ENCODE measurements at regions of chr6 and their contacts with region 1.

Region 1: DNA sequence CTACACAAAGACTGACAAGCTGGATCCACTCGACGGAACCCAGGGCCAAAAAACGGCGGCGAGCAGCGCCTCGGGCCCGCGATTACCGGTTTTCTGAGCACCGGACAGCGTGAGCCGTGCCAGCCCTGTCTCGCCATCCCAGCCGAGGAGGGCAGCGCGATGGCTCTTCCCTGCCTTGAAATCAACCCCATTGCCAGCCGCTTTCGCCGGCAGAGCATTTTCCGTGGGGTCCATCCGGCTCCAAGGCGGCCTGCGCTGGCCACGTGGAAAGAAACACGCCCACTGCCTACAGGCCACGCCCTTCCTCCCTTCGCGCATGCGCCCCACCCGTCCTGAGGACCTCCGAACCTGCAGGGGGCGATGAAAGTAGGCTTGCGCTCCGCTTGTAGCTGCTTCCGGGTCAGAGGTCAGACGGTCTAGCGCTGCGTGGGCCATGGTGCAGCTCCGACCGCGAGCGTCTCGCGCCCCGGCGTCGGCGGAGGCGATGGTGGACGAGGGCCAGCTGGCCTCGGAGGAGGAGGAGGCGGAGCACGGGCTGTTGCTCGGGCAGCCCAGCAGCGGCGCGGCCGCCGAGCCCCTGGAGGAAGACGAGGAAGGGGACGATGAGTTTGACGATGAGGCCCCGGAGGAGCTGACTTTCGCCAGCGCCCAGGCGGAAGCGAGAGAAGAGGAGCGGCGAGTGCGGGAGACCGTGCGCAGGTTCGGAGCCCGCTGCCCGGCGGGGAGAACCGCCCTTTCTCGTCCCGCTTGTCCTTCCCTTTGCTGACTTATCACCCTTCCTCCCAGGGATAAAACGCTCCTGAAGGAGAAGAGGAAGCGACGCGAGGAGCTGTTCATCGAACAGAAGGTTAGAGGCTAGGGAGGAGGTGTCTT is at the start of gene NOL7:
- H3K4me3 ChIP-seq: peak within 1 kb of the TSS; percentile 73
- H3K27ac ChIP-seq: peak within 1 kb of the TSS; percentile 60
- H3K4me1 ChIP-seq: peaks cover 12% of the 10 kb centered on the region
- CTCF ChIP-seq: peak; percentile 100

Region 2: DNA sequence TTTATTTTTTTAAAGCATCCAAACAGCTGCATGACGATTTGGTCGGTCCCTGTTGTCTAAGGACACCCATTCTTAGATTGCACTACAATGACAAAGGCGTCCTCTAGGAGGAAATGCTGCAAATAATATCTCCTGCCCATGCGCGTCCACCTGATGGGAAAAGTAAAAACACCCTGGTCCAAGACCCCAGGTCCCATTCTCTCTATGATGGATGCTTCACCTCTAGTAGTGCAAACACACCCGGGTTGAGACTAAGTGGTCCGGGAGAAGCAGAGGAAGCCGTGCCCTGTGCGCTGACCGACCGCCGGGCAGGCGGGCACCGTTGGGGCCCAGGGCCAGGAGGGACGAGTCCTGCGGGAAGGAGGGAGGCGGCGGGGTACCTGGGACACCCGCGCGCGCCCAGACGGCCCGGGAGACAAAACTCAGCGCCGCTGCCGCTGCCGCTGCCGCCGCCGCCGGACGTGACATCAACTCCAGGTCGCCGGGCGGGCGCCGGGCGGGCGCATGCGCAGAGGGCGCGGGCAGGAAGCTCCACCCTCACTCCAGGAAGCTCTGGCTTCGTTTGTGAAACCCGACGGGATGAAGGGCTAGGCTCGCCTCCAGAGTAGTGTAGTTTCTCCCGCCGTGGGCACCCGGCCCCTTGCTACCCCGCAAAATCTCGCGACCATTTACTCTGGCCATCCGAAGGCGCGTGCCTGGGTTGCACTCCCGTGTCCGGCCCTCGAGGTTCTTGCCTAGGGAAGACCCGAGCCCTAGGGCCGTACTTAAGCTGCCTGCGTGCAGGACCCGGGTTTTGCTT is 286.9 kb before region 1 on chr6 and contains the start of gene TBC1D7:
- CTCF ChIA-PET with region 1: interaction called, 9 read pairs
- POLR2A ChIA-PET with region 1: interaction called, 21 read pairs
- H3K4me3 ChIP-seq: peak within 1 kb of the TSS; percentile 97
- H3K27ac ChIP-seq: peak within 1 kb of the TSS; percentile 83
- H3K4me1 ChIP-seq: peaks cover 3% of the 10 kb centered on the region; the same call in 1 of the 2 replicates
- CTCF ChIP-seq: peak; percentile 40; the same call in 1 of the 2 replicates

Region 3: GRCh38 chr6:13604546-13605416 is 10.4 kb before region 1 on chr6:
- CTCF ChIA-PET with region 1: interaction called, 10 read pairs
- POLR2A ChIA-PET with region 1: interaction called, 7 read pairs
- H3K4me3 ChIP-seq: no peak overlapping the region
- H3K27ac ChIP-seq: no peak overlapping the region
- H3K4me1 ChIP-seq: no peaks in the 10 kb centered on the region
- CTCF ChIP-seq: no peak

Region 4: GRCh38 chr6:13668291-13668928 is 53.2 kb after region 1 on chr6:
- CTCF ChIA-PET with region 1: no interaction called
- POLR2A ChIA-PET with region 1: no interaction called
- H3K4me3 ChIP-seq: no peak overlapping the region
- H3K27ac ChIP-seq: no peak overlapping the region
- H3K4me1 ChIP-seq: peaks cover 29% of the 10 kb centered on the region
- CTCF ChIP-seq: no peak

Region 5: GRCh38 chr6:13696226-13696625 is 81.1 kb after region 1 on chr6:
- CTCF ChIA-PET with region 1: interaction called, 14 read pairs
- POLR2A ChIA-PET with region 1: interaction called, 7 read pairs
- H3K4me3 ChIP-seq: no peak overlapping the region
- H3K27ac ChIP-seq: no peak overlapping the region
- H3K4me1 ChIP-seq: peaks cover 12% of the 10 kb centered on the region; the same call in 1 of the 2 replicates
- CTCF ChIP-seq: no peak

Region 6: GRCh38 chr6:13711733-13712598 is 96.8 kb after region 1 on chr6 and contains the start of gene RANBP9:
- CTCF ChIA-PET with region 1: interaction called, 3 read pairs
- POLR2A ChIA-PET with region 1: interaction called, 23 read pairs
- H3K4me3 ChIP-seq: peak within 1 kb of the TSS; percentile 88
- H3K27ac ChIP-seq: peak within 1 kb of the TSS; percentile 96
- H3K4me1 ChIP-seq: peaks cover 6% of the 10 kb centered on the region; the same call in 1 of the 2 replicates
- CTCF ChIP-seq: peak; percentile 48; the same call in 1 of the 2 replicates